GM10248 (cell line): ENCODE measurements at regions of chr9 and their contacts with region 1.

Region 1: GRCh38 chr9:123349691-123350480 is 6.1 kb upstream of the CRB2 start:
- DNase-seq: peak; percentile 83
- CTCF ChIP-seq: peak; percentile 84

Region 2: GRCh38 chr9:123073991-123074422 is 275.9 kb before region 1 on chr9:
- CTCF ChIA-PET with region 1: interaction called, 34 read pairs
- POLR2A ChIA-PET with region 1: no interaction called
- DNase-seq: no peak
- CTCF ChIP-seq: no peak

Region 3: GRCh38 chr9:123102375-123103110 is 247.3 kb before region 1 on chr9:
- CTCF ChIA-PET with region 1: interaction called, 36 read pairs
- POLR2A ChIA-PET with region 1: no interaction called
- DNase-seq: no peak
- CTCF ChIP-seq: peak; percentile 41

Region 4: GRCh38 chr9:123322273-123323195 is 27.4 kb before region 1 on chr9:
- CTCF ChIA-PET with region 1: interaction called, 16 read pairs
- POLR2A ChIA-PET with region 1: no interaction called
- DNase-seq: peak; percentile 48
- CTCF ChIP-seq: no peak

Region 5: DNA sequence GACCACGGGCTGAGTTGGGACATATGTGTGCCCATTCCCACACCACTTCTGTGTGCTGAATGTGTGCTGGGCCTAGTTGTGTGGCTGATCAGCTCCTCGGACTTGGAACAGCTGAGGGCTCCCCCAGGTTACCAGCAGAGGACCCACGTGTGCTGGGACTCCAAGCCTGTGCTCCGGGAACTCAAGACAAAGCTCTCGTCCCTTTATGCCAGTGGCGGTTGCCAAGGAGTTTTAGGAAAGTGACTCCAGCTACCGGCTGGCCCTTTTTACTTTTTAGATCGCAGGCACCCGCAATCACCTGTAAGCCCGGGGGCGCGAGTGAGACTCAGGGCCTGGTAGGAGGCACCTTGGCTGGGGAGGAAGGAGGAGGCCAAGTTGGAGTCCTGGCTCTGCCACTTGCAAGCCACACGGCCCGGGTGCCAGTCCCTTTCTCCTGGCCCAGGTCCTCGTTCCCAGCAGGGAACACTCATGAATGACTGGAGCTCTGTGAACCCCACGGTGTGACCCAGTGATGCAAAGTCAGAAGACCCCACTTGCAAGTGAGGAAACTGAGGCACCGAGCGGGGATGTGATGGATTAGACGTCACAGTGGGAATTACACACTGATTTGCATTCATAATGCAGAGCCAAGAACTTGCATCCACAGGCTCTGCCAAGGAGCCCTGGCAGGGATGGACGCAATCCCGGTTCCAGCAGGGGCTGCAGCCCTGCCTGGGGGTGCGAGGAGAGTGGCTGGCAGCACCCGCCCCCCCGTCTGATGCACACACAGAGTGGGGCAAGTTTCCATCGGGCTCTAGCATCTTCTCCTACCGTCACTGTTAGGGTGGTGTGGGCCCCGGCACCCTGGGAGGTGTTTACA is 33.0 kb after region 1 on chr9:
- CTCF ChIA-PET with region 1: interaction called, 82 read pairs
- POLR2A ChIA-PET with region 1: no interaction called
- DNase-seq: no peak
- CTCF ChIP-seq: no peak

Region 6: DNA sequence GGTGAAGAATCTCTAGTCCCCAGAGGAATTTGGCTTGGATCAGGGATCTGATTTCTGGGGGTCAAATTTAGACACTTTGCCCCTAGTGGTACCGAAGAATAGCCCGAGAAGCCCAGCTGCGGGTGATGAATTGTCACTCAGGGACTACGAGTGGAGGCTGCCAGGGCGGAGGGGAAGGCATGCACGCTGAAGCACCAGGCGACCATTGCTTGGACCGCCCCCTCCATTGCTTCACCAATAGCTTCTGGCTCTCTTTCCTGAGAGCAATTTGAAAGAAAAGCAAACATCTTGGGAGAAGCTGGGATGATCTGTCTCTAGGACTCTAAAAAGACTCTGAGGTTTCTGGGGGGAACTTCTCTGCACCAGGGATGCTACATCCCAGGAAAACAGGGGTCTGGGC is 143.7 kb after region 1 on chr9:
- CTCF ChIA-PET with region 1: no interaction called
- POLR2A ChIA-PET with region 1: no interaction called
- DNase-seq: no peak
- CTCF ChIP-seq: no peak